Activated CD4-positive, alpha-beta T cell treated with anti-CD3 and anti-CD28 coated beads for 36 hours (primary cell): ENCODE measurements at regions of chr6 and their contacts with region 1.

Region 1: GRCh38 chr6:79335133-79335674 is 100.7 kb upstream of the HMGN3 start:
- DNase-seq: peak; percentile 11
- ATAC-seq: peak; percentile 70
- H3K4me3 Mint-ChIP-seq: no peak overlapping the region
- H3K27ac Mint-ChIP-seq: no peak overlapping the region
- H3K4me1 Mint-ChIP-seq: peaks cover 31% of the 10 kb centered on the region
- H3K27me3 Mint-ChIP-seq: peaks cover 19% of the 10 kb centered on the region

Region 2: DNA sequence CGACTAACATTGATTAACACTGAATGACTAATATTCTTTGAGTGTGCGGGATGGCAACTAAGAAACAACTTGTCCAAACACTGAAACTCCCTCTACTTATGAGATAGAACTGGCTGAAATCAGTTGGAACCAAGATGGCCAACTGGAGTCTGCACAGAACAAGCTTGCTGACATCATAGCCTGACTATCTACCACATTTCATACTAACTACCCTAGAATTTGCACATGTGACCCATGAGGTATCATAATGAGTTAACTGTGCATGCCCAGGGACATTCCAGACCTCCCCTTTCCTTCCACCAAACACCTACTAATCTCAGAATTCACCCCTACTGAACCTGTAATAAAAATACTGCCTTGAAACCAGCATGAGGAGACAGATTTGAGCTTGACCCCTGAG is 300.3 kb before region 1 on chr6:
- CTCF ChIA-PET with region 1: no interaction called
- POLR2A ChIA-PET with region 1: no interaction called
- intact Hi-C with region 1: loop called (anchors 5 to 10 kb)
- DNase-seq: peak; percentile 34
- ATAC-seq: peak; percentile 97
- H3K4me3 Mint-ChIP-seq: no peak overlapping the region
- H3K27ac Mint-ChIP-seq: peak overlapping the region; percentile 72
- H3K4me1 Mint-ChIP-seq: peaks cover 70% of the 10 kb centered on the region
- H3K27me3 Mint-ChIP-seq: no peaks in the 10 kb centered on the region

Region 3: DNA sequence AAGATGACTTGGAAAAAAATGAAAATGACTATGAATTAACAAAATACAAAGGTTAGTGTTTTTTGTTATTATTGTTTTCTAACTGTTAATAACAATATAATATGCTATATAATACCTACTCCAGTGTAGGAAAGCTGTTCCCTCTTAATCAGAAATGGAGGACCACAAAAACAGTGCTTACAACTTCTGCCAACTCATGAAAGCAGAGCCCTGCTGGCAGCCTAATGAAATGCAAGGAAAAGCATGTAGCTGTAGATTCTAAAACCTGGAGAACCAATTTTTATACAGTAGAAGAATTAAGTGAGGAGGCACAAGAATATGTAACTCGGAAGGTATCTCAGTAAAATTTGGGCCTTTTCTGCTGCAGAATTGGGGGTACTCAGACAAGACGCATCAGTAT is 286.6 kb before region 1 on chr6:
- CTCF ChIA-PET with region 1: no interaction called
- POLR2A ChIA-PET with region 1: no interaction called
- intact Hi-C with region 1: loop called in 1 of 2 experiments (anchors 10 kb)
- DNase-seq: peak; percentile 24
- ATAC-seq: no peak
- H3K4me3 Mint-ChIP-seq: no peak overlapping the region
- H3K27ac Mint-ChIP-seq: no peak overlapping the region
- H3K4me1 Mint-ChIP-seq: peaks cover 28% of the 10 kb centered on the region
- H3K27me3 Mint-ChIP-seq: no peaks in the 10 kb centered on the region

Region 4: GRCh38 chr6:79233611-79234149 is 101.5 kb before region 1 on chr6:
- CTCF ChIA-PET with region 1: no interaction called
- POLR2A ChIA-PET with region 1: no interaction called
- intact Hi-C with region 1: loop called in 1 of 2 experiments (anchors 10 kb)
- DNase-seq: peak; percentile 83
- ATAC-seq: peak; percentile 68
- H3K4me3 Mint-ChIP-seq: peak overlapping the region; percentile 98
- H3K27ac Mint-ChIP-seq: peak overlapping the region; percentile 92
- H3K4me1 Mint-ChIP-seq: peaks cover 16% of the 10 kb centered on the region
- H3K27me3 Mint-ChIP-seq: peaks cover 2% of the 10 kb centered on the region

Region 5: GRCh38 chr6:80163658-80164187 is 828.5 kb after region 1 on chr6:
- CTCF ChIA-PET with region 1: no interaction called
- POLR2A ChIA-PET with region 1: no interaction called
- intact Hi-C with region 1: loop called in 1 of 2 experiments (anchors 5 kb)
- DNase-seq: peak; percentile 13
- ATAC-seq: peak; percentile 80
- H3K4me3 Mint-ChIP-seq: no peak overlapping the region
- H3K27ac Mint-ChIP-seq: no peak overlapping the region
- H3K4me1 Mint-ChIP-seq: peaks cover 2% of the 10 kb centered on the region
- H3K27me3 Mint-ChIP-seq: no peaks in the 10 kb centered on the region

Region 6: DNA sequence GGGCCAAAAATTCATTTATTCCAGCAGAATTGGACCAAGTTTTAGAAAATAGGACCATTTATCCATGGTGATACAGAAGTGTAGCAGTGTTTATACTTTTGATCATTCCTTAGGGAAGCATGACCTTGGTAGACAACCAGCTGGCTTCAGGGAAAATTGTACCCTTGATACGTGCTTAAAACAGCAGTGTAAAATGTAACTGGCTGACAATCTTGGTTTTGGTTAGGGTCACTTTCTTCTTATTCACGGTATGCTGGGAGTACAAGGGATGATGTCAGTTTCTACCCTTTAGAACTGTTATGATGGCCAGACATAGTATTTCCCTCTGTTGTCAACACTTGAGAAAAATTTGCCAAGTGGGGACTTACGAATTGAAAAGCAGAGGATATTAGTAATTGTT is 928.4 kb after region 1 on chr6:
- CTCF ChIA-PET with region 1: no interaction called
- POLR2A ChIA-PET with region 1: no interaction called
- intact Hi-C with region 1: no loop called
- DNase-seq: no peak
- ATAC-seq: no peak
- H3K4me3 Mint-ChIP-seq: no peak overlapping the region
- H3K27ac Mint-ChIP-seq: no peak overlapping the region
- H3K4me1 Mint-ChIP-seq: no peaks in the 10 kb centered on the region
- H3K27me3 Mint-ChIP-seq: no peaks in the 10 kb centered on the region